Activated CD4-positive, alpha-beta T cell treated with anti-CD3 and anti-CD28 coated beads, Interleukin-2, amount 10 ng/mL, durations not matched to agents 24 days and 14 days (primary cell): ENCODE measurements at regions of chr9 and their contacts with region 1.

Region 1: DNA sequence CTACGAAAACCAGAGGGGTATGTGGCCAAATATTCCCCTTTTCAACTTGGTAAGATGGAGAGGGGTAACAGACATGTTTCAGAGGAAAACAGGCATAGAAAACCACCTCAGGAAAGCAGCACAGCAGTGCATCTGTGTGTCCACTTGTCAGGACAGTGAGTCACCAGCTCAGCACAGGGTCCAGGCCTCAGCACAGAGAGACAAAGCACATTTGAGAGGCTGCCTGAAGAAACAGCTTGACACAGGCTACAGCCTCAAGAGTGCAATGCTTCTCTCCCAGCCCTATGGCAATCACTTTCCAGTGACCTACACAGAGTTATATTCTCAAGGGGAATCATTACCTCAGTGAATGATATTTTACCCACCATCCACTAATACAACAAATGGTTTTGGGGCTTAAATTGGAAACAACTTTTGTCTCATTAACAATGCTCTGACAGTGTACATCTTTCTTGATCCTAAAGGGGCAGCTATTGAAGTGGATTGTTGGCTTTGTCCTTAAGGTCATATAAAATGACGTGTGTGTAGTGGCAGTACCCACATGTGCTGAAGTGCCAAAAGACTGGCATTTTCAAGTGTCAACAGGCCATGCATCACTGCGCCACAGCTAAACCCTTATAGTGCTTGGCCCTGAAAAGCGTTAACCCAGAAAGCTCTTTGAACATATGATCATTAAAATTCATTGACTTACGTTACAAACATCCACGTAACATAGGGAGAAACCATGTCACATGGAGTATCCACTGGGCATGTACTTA is 46.4 kb downstream of the ERMP1 start:
- DNase-seq: no peak
- H3K4me3 Mint-ChIP-seq: no peak overlapping the region
- H3K27ac Mint-ChIP-seq: peak overlapping the region; percentile 6
- H3K4me1 Mint-ChIP-seq: peaks cover 30% of the 10 kb centered on the region
- H3K27me3 Mint-ChIP-seq: no peaks in the 10 kb centered on the region

Region 2: DNA sequence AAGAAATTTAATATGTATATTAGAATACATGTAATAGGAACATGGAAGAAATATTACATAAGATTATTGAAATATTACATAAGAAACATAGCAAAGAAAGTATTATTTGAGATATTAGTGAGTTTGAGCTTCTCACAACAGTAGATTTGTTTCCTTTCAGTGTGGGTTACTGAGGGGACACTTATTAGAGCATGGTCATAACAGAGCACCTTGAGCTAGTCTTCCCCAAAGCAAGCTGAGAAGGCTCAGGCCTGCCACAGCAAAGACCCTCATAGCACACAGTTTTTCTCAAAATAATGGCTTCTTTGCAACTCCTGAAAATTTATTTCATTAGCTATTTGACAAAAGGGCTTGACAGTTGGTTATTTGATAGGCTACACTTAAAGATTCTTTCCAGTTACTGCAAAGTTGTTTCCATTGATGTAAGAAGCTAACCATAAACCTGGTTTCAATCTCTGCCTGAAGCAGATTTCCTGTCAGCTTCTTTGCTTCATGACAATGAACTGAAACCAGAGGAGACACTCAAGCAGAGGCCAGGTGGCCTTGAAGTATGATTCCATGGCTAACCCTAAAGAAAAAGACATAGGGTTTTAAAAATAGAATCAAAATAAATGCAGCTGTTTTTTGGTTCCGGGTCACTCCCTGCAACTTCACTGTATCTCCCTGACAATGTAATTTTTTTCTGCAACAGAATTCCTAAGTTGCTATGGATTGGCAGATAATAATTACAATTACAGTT is 22.2 kb before region 1 on chr9:
- intact Hi-C with region 1: loop called (anchors 2 kb)
- DNase-seq: peak; percentile 73
- H3K4me3 Mint-ChIP-seq: no peak overlapping the region
- H3K27ac Mint-ChIP-seq: peak overlapping the region; percentile 45
- H3K4me1 Mint-ChIP-seq: peaks cover 33% of the 10 kb centered on the region
- H3K27me3 Mint-ChIP-seq: no peaks in the 10 kb centered on the region

Region 3: DNA sequence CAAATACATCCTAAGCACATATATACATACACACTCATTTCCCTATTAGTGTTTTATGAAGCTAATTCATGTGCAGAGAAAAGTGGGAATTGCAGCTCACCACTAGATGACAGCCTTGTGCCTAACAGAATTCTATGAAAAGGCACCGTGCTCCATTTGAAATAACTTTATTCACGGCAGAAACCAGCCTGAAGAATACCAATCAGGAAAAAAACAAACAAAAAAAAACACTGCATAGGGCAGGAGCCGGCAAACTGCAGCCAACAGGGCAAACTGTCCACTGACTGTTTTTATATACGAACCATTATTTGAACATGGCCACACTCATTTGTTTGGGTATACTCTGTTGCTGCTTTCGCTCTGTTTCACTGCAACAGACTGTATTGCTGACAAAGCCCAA is 12.8 kb after region 1 on chr9:
- intact Hi-C with region 1: no loop called
- DNase-seq: peak; percentile 63
- H3K4me3 Mint-ChIP-seq: no peak overlapping the region
- H3K27ac Mint-ChIP-seq: no peak overlapping the region
- H3K4me1 Mint-ChIP-seq: peaks cover 14% of the 10 kb centered on the region
- H3K27me3 Mint-ChIP-seq: no peaks in the 10 kb centered on the region

Region 4: DNA sequence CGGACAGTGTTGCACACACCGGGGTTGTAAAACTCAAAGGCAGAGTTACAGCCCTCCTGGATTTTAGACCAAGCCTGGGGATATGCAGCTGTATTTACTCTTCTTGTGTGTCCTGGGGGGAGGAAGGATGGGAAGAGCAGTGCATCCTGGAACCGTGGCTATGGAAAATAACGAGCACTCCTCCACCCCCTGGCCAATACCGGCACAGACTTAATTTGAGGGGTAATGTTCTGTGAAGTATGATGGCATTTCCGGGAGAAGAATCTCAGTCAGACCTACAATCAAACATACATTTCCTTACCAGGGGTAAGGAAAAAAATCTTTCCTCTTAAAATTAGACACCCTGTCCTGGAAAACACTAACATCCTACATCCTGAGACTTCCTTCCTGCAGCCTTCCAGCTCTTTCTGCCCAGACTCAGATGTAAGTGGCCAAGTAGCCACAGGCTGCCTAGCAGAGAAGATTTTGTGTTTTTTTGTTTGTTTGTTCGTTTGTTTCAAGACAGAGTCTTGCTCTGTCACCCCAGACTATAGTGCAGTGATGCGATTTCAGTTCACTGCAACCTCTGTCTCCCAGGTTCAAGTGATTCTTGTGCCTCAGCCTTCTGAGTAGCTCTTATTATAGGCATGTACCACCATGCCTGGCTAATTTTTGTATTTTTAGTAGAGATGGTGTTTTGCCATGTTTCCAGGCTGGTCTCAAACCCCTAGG is 57.4 kb after region 1 on chr9:
- intact Hi-C with region 1: loop called (anchors 2 kb)
- DNase-seq: peak; percentile 63
- H3K4me3 Mint-ChIP-seq: peak overlapping the region; percentile 73
- H3K27ac Mint-ChIP-seq: peak overlapping the region; percentile 91
- H3K4me1 Mint-ChIP-seq: peaks cover 68% of the 10 kb centered on the region
- H3K27me3 Mint-ChIP-seq: no peaks in the 10 kb centered on the region

Region 5: GRCh38 chr9:5909976-5910375 is 123.4 kb after region 1 on chr9:
- intact Hi-C with region 1: no loop called
- DNase-seq: no peak
- H3K4me3 Mint-ChIP-seq: no peak overlapping the region
- H3K27ac Mint-ChIP-seq: peak overlapping the region; percentile 68
- H3K4me1 Mint-ChIP-seq: peaks cover 15% of the 10 kb centered on the region
- H3K27me3 Mint-ChIP-seq: no peaks in the 10 kb centered on the region